ENCODE measurements at regions of chr1 and their contacts with region 1.

Region 1: DNA sequence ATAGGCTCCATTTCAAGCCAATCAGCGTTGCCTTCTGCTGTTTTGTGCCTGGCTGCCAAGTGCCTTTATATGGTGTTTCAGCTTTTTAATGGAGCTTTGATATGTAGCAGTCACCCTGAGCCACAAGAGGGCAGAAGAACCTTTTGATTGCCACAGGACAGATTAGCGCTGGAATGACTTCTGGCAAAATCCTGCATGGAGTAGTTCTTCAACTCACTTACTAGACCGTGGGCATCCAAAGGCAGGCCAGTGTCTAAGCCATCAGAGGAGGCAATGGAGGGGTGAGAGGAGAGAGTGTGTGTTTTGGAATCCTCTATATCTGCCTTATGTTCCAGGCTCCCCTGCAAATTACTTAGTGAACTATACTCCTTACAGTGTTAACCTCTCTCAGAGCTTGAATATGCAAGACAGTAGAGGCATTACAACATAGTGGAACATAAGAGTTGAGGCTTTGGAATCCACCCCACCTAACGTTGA is 56.2 kb downstream of the ST3GAL3 start:
- DNase-seq: peak; percentile 59 to 62
- H3K4me3 ChIP-seq: no peak overlapping the region
- H3K4me3 Mint-ChIP-seq: no peak overlapping the region
- H3K27ac Mint-ChIP-seq: no peak overlapping the region
- H3K4me1 ChIP-seq: no peaks in the 10 kb centered on the region
- H3K4me1 Mint-ChIP-seq: no peaks in the 10 kb centered on the region
- H3K27me3 ChIP-seq: no peaks in the 10 kb centered on the region
- H3K27me3 Mint-ChIP-seq: no peaks in the 10 kb centered on the region
- CTCF ChIP-seq: peak; percentile 66 to 72

Region 2: GRCh38 chr1:43529206-43529731 is 234.3 kb before region 1 on chr1:
- CTCF ChIA-PET with region 1: no interaction called
- POLR2A ChIA-PET with region 1: no interaction called
- intact Hi-C with region 1: loop called (anchors 2 kb)
- DNase-seq: peak; percentile 73 to 84
- H3K4me3 ChIP-seq: no peak overlapping the region
- H3K4me3 Mint-ChIP-seq: peak overlapping the region; percentile 78
- H3K27ac Mint-ChIP-seq: no peak overlapping the region
- H3K4me1 ChIP-seq: peaks cover 32% of the 10 kb centered on the region
- H3K4me1 Mint-ChIP-seq: peaks cover 64% of the 10 kb centered on the region
- H3K27me3 ChIP-seq: no peaks in the 10 kb centered on the region
- H3K27me3 Mint-ChIP-seq: no peaks in the 10 kb centered on the region
- CTCF ChIP-seq: peak; percentile 84

Region 3: GRCh38 chr1:43879414-43879813 is 115.9 kb after region 1 on chr1:
- CTCF ChIA-PET with region 1: no interaction called
- POLR2A ChIA-PET with region 1: no interaction called
- intact Hi-C with region 1: loop called (anchors 10 kb)
- DNase-seq: no peak
- H3K4me3 ChIP-seq: no peak overlapping the region
- H3K4me3 Mint-ChIP-seq: no peak overlapping the region
- H3K27ac Mint-ChIP-seq: no peak overlapping the region
- H3K4me1 ChIP-seq: peaks cover 2% of the 10 kb centered on the region; the same call in 1 of the 2 replicates
- H3K4me1 Mint-ChIP-seq: no peaks in the 10 kb centered on the region
- H3K27me3 ChIP-seq: no peaks in the 10 kb centered on the region
- H3K27me3 Mint-ChIP-seq: no peaks in the 10 kb centered on the region
- CTCF ChIP-seq: no peak

Region 4: GRCh38 chr1:43934101-43934985 is 170.8 kb after region 1 on chr1:
- CTCF ChIA-PET with region 1: interaction called, 66 read pairs
- POLR2A ChIA-PET with region 1: no interaction called
- intact Hi-C with region 1: loop called (anchors 1 kb)
- DNase-seq: peak; percentile 59 to 63
- H3K4me3 ChIP-seq: no peak overlapping the region
- H3K4me3 Mint-ChIP-seq: peak overlapping the region; percentile 61
- H3K27ac Mint-ChIP-seq: no peak overlapping the region
- H3K4me1 ChIP-seq: peaks cover 9% of the 10 kb centered on the region
- H3K4me1 Mint-ChIP-seq: no peaks in the 10 kb centered on the region
- H3K27me3 ChIP-seq: no peaks in the 10 kb centered on the region
- H3K27me3 Mint-ChIP-seq: no peaks in the 10 kb centered on the region
- CTCF ChIP-seq: peak; percentile 61 to 72

Region 5: DNA sequence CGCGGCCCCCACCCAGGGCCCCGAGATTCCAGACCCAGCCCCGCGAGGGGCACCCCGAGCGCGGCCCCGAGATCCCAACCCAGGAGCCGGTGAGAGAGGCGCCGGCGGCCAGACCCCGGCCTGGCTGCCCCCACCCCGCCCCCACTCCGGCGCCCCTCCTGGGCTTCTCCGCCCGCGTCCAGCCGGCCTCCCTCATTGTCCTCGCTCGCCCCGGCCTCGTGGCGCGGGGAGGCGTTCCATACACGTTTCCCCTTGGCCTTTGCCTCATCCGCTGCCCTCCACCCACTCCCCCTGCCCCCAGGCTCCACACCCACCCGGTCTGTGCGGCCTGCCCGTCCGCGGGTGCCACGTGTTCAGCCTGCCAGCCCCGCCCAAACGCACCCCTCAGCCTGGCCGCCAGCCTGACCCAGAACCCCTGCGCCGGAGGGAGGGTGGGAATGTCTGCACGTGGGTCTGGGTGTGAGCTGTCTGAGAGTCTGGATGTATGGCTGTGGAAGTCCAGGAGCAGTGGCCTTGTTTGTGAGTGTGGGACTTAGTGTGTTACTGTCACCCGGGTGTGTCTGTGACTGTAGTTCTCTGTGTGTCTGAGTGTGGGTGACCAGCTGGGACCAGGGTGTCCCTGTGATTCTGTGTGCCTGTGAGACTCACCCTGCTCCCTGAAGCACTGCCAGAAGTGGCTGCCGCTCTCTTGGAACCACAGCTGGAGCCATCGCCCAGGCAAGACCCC is 216.2 kb after region 1 on chr1:
- CTCF ChIA-PET with region 1: no interaction called
- POLR2A ChIA-PET with region 1: no interaction called
- intact Hi-C with region 1: no loop called
- DNase-seq: peak; percentile 41 to 49
- H3K4me3 ChIP-seq: peak overlapping the region; percentile 80
- H3K4me3 Mint-ChIP-seq: peak overlapping the region; percentile 75
- H3K27ac Mint-ChIP-seq: peak overlapping the region; percentile 52
- H3K4me1 ChIP-seq: peaks cover 21% of the 10 kb centered on the region
- H3K4me1 Mint-ChIP-seq: peaks cover 24% of the 10 kb centered on the region
- H3K27me3 ChIP-seq: no peaks in the 10 kb centered on the region
- H3K27me3 Mint-ChIP-seq: no peaks in the 10 kb centered on the region
- CTCF ChIP-seq: no peak

Region 6: GRCh38 chr1:43991476-43992231 is 228.1 kb after region 1 on chr1 and contains the start of gene CCDC24:
- CTCF ChIA-PET with region 1: no interaction called
- POLR2A ChIA-PET with region 1: no interaction called
- intact Hi-C with region 1: loop called (anchors 2 kb)
- DNase-seq: peak; percentile 84
- H3K4me3 ChIP-seq: peak within 1 kb of the TSS; percentile 57
- H3K4me3 Mint-ChIP-seq: peak within 1 kb of the TSS; percentile 94
- H3K27ac Mint-ChIP-seq: peak within 1 kb of the TSS; percentile 91
- H3K4me1 ChIP-seq: peaks cover 6% of the 10 kb centered on the region; the same call in 1 of the 2 replicates
- H3K4me1 Mint-ChIP-seq: peaks cover 18% of the 10 kb centered on the region
- H3K27me3 ChIP-seq: no peaks in the 10 kb centered on the region
- H3K27me3 Mint-ChIP-seq: no peaks in the 10 kb centered on the region
- CTCF ChIP-seq: no peak
- total RNA-seq, gene CCDC24: 5.1 and 5.2 TPM in 2 replicates

Region 7: GRCh38 chr1:44036409-44037139 is 273.0 kb after region 1 on chr1:
- CTCF ChIA-PET with region 1: interaction called, 4 read pairs
- POLR2A ChIA-PET with region 1: no interaction called
- intact Hi-C with region 1: loop called (anchors 5 kb)
- DNase-seq: peak; percentile 66 to 75
- H3K4me3 ChIP-seq: no peak overlapping the region
- H3K4me3 Mint-ChIP-seq: no peak overlapping the region
- H3K27ac Mint-ChIP-seq: peak overlapping the region; percentile 48
- H3K4me1 ChIP-seq: peaks cover 15% of the 10 kb centered on the region
- H3K4me1 Mint-ChIP-seq: peaks cover 16% of the 10 kb centered on the region
- H3K27me3 ChIP-seq: no peaks in the 10 kb centered on the region
- H3K27me3 Mint-ChIP-seq: no peaks in the 10 kb centered on the region
- CTCF ChIP-seq: peak; percentile 59 to 81

Measured in Caco-2 (cell line).